ENCODE measurements at regions of chr7 and their contacts with region 1.

Region 1: DNA sequence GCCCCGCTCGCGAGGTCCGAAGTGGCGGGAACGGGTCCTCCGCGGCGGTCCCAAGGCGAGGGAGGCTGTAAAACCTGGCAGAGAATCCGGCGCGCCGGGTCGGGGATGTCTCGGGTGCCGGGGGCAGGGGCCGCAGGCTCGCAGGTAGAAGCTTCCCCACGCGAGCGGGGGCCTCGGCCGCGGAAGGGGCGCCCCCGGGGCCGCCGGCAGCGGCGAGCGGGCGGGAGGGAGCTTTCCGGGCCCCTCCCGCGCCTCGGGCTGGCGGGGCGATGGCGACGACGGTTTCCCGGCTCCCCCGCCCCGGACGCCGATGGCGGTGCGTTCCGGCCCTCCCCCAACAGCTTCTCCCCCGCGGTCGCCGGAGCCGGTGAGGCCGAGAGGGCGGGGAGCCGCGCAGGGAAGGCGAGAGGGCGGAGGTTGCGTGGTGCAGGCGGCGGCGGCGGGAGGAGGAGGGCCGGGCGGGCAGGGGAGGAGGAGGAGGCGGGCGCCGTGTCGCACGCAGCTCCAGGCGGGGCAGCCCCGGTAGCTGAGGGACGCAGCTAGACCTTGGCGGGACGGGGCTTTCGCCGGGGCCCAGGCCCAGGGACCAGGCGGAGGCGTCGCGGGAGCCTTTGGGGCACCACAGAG is at the start of gene CUL1:
- DNase-seq: peak; percentile 75
- ATAC-seq: peak; percentile 76
- H3K4me3 Mint-ChIP-seq: peak within 1 kb of the TSS; percentile 90
- H3K27ac Mint-ChIP-seq: peak within 1 kb of the TSS; percentile 90
- H3K4me1 Mint-ChIP-seq: peaks cover 45% of the 10 kb centered on the region
- H3K27me3 Mint-ChIP-seq: no peaks in the 10 kb centered on the region
- CTCF ChIP-seq: no peak
- total RNA-seq, gene CUL1: 56.9 and 57.4 TPM in 2 replicates

Region 2: DNA sequence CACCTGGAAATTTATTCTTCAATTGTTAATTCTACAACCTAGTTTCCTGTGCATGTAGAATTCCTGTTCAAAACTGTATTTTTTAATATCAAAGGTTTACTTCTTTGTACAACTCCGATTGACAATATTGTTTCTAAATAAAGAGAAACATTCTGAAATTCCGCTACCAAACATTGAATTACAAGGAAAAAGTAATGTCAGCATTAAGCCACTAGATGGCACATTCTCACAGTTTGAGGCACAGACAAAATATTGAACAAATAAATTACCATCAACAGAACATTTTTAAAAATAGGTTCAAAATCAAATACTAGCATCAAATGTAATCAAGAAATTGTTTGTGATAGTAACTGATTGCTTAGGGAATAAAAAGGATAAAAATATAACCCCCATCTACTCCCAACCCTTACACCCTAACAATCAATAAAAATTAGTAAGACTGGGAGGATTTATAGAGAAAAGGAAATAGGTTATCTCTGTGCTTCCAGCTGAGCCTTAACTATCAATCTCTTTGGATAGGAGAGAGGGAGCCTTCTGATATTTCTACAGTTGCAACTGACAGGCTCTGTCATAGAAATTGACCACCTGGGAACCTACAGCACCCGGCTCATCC is 194.5 kb before region 1 on chr7:
- CTCF ChIA-PET with region 1: no interaction called
- POLR2A ChIA-PET with region 1: interaction called, 6 read pairs
- intact Hi-C with region 1: loop called (anchors 1 kb)
- DNase-seq: no peak
- ATAC-seq: no peak
- H3K4me3 Mint-ChIP-seq: no peak overlapping the region
- H3K27ac Mint-ChIP-seq: peak overlapping the region; percentile 50
- H3K4me1 Mint-ChIP-seq: peaks cover 76% of the 10 kb centered on the region
- H3K27me3 Mint-ChIP-seq: no peaks in the 10 kb centered on the region
- CTCF ChIP-seq: no peak

Region 3: GRCh38 chr7:148712678-148713329 is 14.3 kb after region 1 on chr7:
- CTCF ChIA-PET with region 1: no interaction called
- POLR2A ChIA-PET with region 1: interaction called, 22 read pairs
- intact Hi-C with region 1: loop called (anchors 2 kb)
- DNase-seq: no peak
- ATAC-seq: no peak
- H3K4me3 Mint-ChIP-seq: peak overlapping the region; percentile 15
- H3K27ac Mint-ChIP-seq: peak overlapping the region; percentile 31
- H3K4me1 Mint-ChIP-seq: peaks cover 89% of the 10 kb centered on the region
- H3K27me3 Mint-ChIP-seq: no peaks in the 10 kb centered on the region
- CTCF ChIP-seq: no peak

Region 4: GRCh38 chr7:148884299-148885022 is 186.0 kb after region 1 on chr7:
- CTCF ChIA-PET with region 1: no interaction called
- POLR2A ChIA-PET with region 1: interaction called, 16 read pairs
- intact Hi-C with region 1: loop called (anchors 1 kb)
- DNase-seq: peak; percentile 95
- ATAC-seq: peak; percentile 93
- H3K4me3 Mint-ChIP-seq: peak overlapping the region; percentile 87
- H3K27ac Mint-ChIP-seq: peak overlapping the region; percentile 82
- H3K4me1 Mint-ChIP-seq: peaks cover 26% of the 10 kb centered on the region
- H3K27me3 Mint-ChIP-seq: no peaks in the 10 kb centered on the region
- CTCF ChIP-seq: no peak

Region 5: GRCh38 chr7:148987010-148987750 is 288.7 kb after region 1 on chr7:
- CTCF ChIA-PET with region 1: interaction called, 3 read pairs
- POLR2A ChIA-PET with region 1: interaction called, 4 read pairs
- intact Hi-C with region 1: loop called (anchors 1 kb)
- DNase-seq: peak; percentile 60
- ATAC-seq: peak; percentile 85
- H3K4me3 Mint-ChIP-seq: peak overlapping the region; percentile 96
- H3K27ac Mint-ChIP-seq: peak overlapping the region; percentile 93
- H3K4me1 Mint-ChIP-seq: peaks cover 50% of the 10 kb centered on the region
- H3K27me3 Mint-ChIP-seq: peaks cover 2% of the 10 kb centered on the region
- CTCF ChIP-seq: no peak

Region 6: DNA sequence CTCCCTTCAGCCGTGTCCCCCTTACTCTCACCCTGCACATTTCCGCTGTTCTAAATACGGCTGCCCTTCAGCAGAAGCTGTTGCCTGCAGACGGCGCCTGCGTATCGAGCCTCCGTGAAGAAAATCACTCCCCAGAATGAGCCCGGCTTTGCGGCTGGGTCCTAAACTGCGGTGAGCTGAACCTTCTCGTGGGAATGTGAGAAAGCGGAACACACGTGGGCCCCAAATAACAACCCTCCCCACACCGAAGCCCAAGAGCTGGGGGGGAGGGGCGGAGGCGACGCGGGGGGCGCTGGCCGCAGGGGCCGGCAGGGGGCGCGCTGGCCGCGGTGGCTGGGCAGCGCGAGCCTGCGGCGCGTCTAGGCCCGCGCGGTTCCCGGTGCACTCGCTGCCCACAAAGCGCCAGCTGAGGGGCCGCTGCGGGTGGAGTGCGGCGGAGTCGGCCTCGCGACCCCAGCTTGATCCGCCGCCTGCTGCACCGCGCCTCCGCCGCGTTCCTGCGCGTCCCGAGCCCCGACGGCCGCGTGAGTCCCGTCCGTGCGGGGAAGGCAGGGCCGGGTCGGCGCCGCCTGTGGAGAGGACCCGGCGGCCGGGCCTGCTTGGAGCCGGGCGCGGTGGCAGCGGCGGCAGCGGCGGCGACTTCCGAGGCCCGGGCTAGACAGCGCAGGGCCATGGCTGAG is 448.7 kb after region 1 on chr7 and contains the start of gene ZNF398:
- CTCF ChIA-PET with region 1: no interaction called
- POLR2A ChIA-PET with region 1: interaction called, 4 read pairs
- intact Hi-C with region 1: loop called (anchors 2 kb)
- DNase-seq: peak; percentile 87
- ATAC-seq: peak; percentile 84
- H3K4me3 Mint-ChIP-seq: peak within 1 kb of the TSS; percentile 91
- H3K27ac Mint-ChIP-seq: peak within 1 kb of the TSS; percentile 94
- H3K4me1 Mint-ChIP-seq: peaks cover 32% of the 10 kb centered on the region
- H3K27me3 Mint-ChIP-seq: no peaks in the 10 kb centered on the region
- CTCF ChIP-seq: no peak
- total RNA-seq, gene ZNF398: 15.1 and 17.3 TPM in 2 replicates

Measured in activated B cell treated with CpG ODN at 0.5 μM for 24 hours (primary cell).